ENCODE measurements at regions of chr7 and their contacts with region 1.

Region 1: DNA sequence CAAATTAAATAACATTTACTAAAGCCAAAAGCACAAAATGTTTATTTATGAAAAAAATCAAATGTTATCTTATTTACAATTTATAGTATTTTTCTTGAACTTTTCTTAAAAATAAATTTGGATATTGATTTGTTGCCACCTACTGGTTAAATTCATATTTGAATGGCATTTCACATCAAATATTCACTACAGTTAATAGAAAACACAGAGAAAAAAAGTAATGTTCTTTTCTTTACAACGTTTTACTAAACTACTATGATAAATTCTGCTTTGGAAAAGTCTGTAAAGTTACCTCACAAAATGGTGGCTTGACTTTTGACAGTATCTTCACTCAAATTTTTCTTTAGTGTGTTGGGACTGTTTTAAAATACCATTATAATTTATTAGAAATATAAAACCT is 52.7 kb downstream of the SRPK2 start:
- DNase-seq: no peak
- ATAC-seq: no peak
- H3K4me3 ChIP-seq: no peak overlapping the region
- H3K27ac ChIP-seq: no peak overlapping the region
- H3K4me1 ChIP-seq: no peaks in the 10 kb centered on the region; the same call in 1 of the 2 replicates
- H3K27me3 ChIP-seq: no peaks in the 10 kb centered on the region
- CTCF ChIP-seq: no peak

Region 2: DNA sequence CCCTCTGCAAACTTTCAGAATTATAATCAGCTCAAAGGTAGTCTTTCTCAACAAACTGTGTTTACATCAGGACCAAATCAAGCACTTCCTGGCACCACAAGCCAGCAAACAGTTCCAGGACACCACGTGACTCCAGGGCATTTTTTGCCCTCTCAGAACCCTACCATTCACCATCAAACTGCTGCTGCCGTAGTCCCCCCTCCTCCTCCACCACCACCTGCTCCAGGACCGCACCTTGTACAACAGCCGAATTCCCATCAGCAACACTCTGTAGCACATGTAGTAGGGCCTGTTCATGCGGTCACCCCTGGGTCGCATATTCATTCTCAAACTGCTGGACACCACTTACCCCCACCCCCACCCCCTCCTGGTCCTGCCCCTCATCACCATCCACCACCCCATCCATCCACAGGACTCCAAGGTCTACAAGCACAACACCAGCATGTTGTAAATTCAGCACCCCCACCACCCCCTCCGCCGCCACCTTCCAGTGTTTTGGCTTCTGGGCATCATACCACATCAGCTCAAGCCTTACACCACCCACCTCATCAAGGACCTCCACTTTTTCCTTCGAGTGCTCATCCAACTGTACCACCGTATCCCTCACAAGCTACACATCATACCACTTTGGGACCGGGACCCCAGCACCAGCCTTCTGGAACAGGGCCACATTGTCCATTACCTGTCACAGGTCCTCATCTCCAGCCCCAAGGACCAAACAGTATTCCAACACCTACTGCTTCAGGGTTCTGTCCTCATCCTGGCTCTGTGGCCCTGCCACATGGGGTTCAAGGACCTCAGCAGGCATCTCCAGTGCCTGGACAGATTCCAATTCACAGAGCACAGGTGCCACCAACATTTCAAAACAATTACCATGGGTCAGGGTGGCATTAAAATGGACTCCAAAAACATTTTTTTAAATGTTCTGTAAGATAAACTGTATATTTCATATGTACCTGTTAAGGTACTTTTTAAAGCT is 223.3 kb before region 1 on chr7:
- CTCF ChIA-PET with region 1: no interaction called
- POLR2A ChIA-PET with region 1: no interaction called
- in situ Hi-C with region 1: no loop called
- intact Hi-C with region 1: no loop called
- DNase-seq: no peak
- ATAC-seq: peak; percentile 30; the same call in 1 of the 2 replicates
- H3K4me3 ChIP-seq: no peak overlapping the region
- H3K27ac ChIP-seq: no peak overlapping the region
- H3K4me1 ChIP-seq: no peaks in the 10 kb centered on the region; the same call in 1 of the 2 replicates
- H3K27me3 ChIP-seq: no peaks in the 10 kb centered on the region
- CTCF ChIP-seq: no peak

Region 3: GRCh38 chr7:105149827-105150226 is 186.2 kb before region 1 on chr7:
- CTCF ChIA-PET with region 1: no interaction called
- POLR2A ChIA-PET with region 1: no interaction called
- in situ Hi-C with region 1: no loop called
- intact Hi-C with region 1: loop called (anchors 10 kb)
- DNase-seq: peak; percentile 86
- ATAC-seq: no peak
- H3K4me3 ChIP-seq: no peak overlapping the region
- H3K27ac ChIP-seq: no peak overlapping the region
- H3K4me1 ChIP-seq: no peaks in the 10 kb centered on the region
- H3K27me3 ChIP-seq: no peaks in the 10 kb centered on the region
- CTCF ChIP-seq: no peak

Measured in Panc1 (cell line).